ENCODE measurements at regions of chr17 and their contacts with region 1.

Region 1: DNA sequence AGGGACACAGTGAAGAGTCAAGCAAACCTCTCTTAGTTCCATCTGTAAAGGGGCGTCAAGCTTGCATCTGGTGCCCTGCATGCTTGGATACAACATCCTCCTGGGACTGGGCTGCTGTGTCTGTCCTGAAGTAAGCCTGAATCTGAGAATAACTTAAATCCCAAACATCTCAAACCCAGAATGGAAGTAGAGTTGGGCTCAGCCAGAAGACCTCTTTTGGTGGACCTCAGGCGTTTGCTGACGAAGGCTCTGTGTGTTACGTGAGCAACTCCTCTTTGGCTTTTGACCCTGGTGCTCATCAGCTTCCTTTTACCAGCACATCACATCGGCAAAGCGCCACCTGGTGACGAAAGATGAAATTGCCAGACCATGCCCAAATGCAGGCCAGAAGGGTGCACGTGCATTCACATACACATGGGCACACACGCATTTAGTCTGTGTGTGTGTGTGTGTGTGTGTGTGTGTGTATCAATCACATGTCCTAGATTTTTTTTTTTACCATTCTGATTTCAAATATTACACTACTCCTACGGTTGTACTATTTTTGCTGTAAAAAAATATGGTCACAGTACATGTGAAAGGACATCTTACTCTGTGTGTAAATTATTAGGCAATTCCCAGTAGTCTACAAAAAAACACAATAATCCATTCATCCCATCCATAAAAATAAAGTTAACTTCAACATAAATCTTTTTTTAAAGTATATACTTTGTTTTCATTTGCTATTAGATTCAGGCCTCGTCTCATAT is 41.1 kb upstream of the FOXJ1 start:
- DNase-seq: peak; percentile 98
- ATAC-seq: peak; percentile 87
- H3K4me3 Mint-ChIP-seq: no peak overlapping the region
- H3K27ac Mint-ChIP-seq: peak overlapping the region; percentile 94
- H3K4me1 Mint-ChIP-seq: peaks cover 59% of the 10 kb centered on the region
- H3K27me3 Mint-ChIP-seq: no peaks in the 10 kb centered on the region

Region 2: DNA sequence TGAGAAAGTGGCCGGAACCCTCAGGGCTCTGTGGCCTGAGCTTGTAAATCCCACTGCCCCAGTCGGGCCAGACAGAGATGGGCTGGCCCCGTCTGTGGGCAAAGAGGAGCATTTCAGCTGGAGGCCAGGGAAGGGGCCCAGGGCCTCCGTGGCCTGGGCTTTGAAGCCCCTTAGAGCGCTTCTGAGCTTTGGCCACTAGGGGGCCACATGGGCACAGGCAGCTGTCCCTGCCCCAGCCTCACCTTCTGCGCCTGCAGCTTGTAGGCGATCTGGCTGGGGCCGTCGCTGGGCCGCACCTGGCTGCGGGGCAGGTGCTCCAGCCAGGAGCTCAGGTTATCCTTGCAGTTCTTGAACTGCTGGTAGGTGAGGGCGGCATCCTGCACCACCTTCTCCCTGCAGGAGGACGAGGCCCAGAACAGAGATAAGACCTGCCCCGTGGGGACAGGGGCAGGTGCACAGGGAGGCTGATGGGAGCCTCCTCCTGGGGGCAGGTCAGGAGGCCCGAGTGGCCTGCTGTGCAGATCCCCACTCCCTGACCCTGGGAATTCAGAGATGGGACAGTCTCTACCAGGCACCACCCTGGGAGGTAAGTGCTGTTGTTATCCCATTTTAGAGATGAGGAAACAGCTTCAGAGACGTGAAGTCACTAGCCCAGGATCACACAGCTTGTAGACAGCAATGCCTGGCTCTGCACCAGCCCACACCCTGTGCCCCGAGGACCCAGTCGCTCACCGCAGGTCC is 167.8 kb before region 1 on chr17:
- CTCF ChIA-PET with region 1: interaction called, 11 read pairs
- DNase-seq: peak; percentile 85
- ATAC-seq: peak; percentile 98
- H3K4me3 Mint-ChIP-seq: no peak overlapping the region
- H3K27ac Mint-ChIP-seq: no peak overlapping the region
- H3K4me1 Mint-ChIP-seq: peaks cover 4% of the 10 kb centered on the region
- H3K27me3 Mint-ChIP-seq: no peaks in the 10 kb centered on the region

Region 3: GRCh38 chr17:76171706-76172105 is 10.5 kb before region 1 on chr17:
- CTCF ChIA-PET with region 1: interaction called, 22 read pairs
- DNase-seq: no peak
- ATAC-seq: no peak
- H3K4me3 Mint-ChIP-seq: no peak overlapping the region
- H3K27ac Mint-ChIP-seq: no peak overlapping the region
- H3K4me1 Mint-ChIP-seq: peaks cover 4% of the 10 kb centered on the region
- H3K27me3 Mint-ChIP-seq: no peaks in the 10 kb centered on the region

Region 4: DNA sequence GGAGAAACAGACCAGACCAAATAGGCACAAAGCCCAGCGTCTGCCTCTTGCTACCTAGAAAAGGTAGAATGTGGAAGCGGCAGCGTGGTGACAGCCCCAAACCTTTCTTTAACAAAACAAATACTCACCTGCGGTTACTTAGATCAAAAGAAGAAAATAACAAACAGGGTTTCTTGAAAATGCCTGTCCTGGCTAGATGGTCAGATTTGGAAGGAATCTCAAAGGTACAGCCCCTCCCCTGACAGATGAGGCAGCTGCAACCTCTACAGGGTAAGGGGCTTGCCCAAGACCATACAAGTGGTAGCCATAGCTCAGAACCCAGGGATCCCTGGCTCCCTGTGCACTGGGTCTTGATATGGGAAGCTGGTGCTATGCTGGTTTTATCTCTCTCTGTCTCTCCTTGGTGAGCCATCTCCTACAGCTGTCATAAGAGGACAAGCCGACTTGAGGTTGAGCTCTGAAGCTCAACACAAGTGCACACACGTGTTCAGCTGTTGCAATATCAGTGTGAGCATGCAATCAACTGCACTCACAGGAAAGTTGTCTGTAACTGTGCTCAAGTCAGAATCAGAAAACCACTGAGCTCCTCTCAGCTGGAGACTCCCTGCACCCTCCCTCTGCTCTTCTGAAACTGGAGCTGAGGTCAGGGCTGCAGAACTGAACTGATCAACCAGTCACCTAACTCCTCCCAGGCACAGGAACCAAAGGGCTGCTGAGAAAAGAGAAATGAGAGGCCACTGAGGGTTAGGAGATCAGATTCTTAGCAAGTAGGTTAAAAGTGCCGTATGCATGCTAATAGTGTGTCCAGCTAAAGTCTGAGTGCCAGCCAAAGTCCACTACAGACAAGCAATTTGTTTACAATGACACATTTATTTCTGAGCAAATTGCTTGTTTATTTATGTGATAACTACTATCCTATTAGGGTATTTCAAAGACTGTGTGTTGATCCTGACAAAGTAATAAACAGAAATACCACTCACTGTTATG is 64.2 kb after region 1 on chr17:
- CTCF ChIA-PET with region 1: interaction called, 15 read pairs
- DNase-seq: peak; percentile 94
- ATAC-seq: peak; percentile 98
- H3K4me3 Mint-ChIP-seq: peak overlapping the region; percentile 50
- H3K27ac Mint-ChIP-seq: peak overlapping the region; percentile 90
- H3K4me1 Mint-ChIP-seq: peaks cover 73% of the 10 kb centered on the region
- H3K27me3 Mint-ChIP-seq: no peaks in the 10 kb centered on the region

Region 5: DNA sequence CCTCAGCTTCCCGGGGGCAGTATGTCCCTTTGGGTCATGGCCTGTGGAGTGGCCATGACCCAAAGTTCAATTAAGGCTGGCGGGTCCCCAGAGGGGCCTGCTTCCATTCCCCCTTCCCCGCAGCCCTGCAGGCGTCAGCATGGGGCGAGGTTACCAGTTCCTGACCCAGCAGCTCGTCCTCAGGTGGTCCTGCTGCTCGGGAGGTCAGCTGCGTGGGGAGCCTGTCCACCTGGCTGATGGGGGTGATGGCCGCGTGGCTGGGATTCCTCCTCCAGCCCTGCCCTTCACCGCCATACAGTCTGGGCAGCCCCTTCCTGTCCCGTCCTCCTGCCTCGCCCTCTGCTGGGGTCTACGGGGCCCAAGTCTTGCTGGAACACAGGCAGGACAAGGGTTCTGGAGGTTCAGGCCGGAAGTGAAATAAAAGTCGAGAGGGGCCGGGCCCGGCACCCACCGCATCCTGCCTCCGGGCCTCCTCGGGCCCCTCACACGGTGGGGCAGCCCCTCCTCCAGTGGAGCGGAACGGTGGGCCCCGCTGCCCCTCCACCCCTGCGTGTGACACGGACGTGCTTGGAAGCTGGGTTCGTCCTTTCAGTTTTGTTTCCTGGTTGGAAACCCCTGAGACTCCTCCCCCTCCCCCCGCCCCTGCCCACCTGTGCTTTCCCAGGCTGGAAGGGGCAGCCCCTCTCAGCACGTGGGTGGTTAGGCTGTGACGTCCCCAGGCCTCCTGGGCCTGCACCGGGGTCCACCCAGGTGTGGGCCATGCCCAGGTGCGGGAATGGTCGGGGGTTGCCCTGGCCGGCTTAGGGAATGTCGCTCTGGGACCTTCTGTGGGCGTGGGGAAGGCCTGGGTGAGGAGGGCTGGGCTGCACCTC is 89.7 kb after region 1 on chr17:
- CTCF ChIA-PET with region 1: interaction called, 25 read pairs
- DNase-seq: peak; percentile 95
- ATAC-seq: peak; percentile 59
- H3K4me3 Mint-ChIP-seq: peak overlapping the region; percentile 92
- H3K27ac Mint-ChIP-seq: peak overlapping the region; percentile 99
- H3K4me1 Mint-ChIP-seq: peaks cover 51% of the 10 kb centered on the region
- H3K27me3 Mint-ChIP-seq: no peaks in the 10 kb centered on the region

Measured in activated CD8-positive, alpha-beta memory T cell treated with anti-CD3 and anti-CD28 coated beads, Interleukin-2, amount 10 ng/mL, durations not matched to agents 7 days and 5 days (primary cell).